Activated CD4-positive, alpha-beta T cell treated with anti-CD3 and anti-CD28 coated beads for 36 hours (primary cell): ENCODE measurements at regions of chr9 and their contacts with region 1.

Region 1: DNA sequence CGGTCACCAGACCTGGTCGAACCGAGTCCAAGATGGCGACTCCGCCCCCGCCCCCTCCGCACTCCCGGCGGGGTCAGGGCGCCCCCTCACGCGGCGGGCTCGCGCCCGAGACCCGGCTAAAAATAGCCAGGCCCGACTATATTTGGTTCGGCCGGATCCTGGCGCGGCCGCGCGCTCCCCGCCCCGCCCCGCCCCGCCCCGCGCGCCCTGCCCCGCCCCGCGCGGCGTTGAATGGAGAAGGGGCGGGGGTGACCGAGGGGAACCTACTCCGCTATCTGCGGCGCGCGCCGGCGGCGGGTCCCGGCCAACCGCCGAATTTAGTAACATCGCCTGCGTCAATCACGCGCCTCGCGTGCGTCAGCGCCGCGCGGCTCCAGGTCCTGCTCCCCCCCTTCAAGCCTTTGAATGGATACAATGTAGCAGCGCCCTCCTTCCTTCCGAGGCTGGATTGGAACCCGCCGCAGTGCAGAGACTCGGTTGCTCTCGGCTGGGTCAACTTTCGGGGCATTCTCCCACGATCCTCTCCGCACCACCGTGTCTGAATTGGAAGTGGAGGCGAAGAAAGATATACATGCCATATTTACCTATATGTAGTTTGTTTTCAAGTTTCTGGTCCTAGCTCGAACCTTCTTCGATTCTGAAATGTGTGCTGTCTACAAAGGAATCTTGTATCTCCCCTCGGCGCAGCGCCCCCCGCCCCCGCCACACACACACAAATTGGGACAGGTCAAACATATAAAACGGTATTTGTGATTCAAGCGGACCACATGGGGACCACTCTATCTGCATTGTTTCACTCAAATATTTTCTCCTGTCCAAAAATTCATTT is 1.6 kb upstream of the NR4A3 start:
- DNase-seq: peak; percentile 95
- ATAC-seq: peak; percentile 39
- H3K4me3 Mint-ChIP-seq: peak overlapping the region; percentile 88
- H3K27ac Mint-ChIP-seq: peak overlapping the region; percentile 94
- H3K4me1 Mint-ChIP-seq: peaks cover 42% of the 10 kb centered on the region
- H3K27me3 Mint-ChIP-seq: peaks cover 4% of the 10 kb centered on the region

Region 2: GRCh38 chr9:98796364-98797101 is 1023.5 kb before region 1 on chr9 and contains the start of gene ANKS6:
- CTCF ChIA-PET with region 1: no interaction called
- POLR2A ChIA-PET with region 1: no interaction called
- intact Hi-C with region 1: loop called in 1 of 2 experiments (anchors 5 kb)
- DNase-seq: peak; percentile 90
- ATAC-seq: peak; percentile 90
- H3K4me3 Mint-ChIP-seq: peak within 1 kb of the TSS; percentile 77
- H3K27ac Mint-ChIP-seq: peak within 1 kb of the TSS; percentile 81
- H3K4me1 Mint-ChIP-seq: peaks cover 25% of the 10 kb centered on the region
- H3K27me3 Mint-ChIP-seq: no peaks in the 10 kb centered on the region
- total RNA-seq, gene ANKS6: 15.8 to 17.4 TPM

Region 3: GRCh38 chr9:99253772-99254431 is 566.2 kb before region 1 on chr9:
- CTCF ChIA-PET with region 1: no interaction called
- POLR2A ChIA-PET with region 1: interaction called, 3 read pairs
- intact Hi-C with region 1: loop called (anchors 1 kb)
- DNase-seq: peak; percentile 95
- ATAC-seq: peak; percentile 83
- H3K4me3 Mint-ChIP-seq: peak overlapping the region; percentile 58
- H3K27ac Mint-ChIP-seq: peak overlapping the region; percentile 95
- H3K4me1 Mint-ChIP-seq: peaks cover 60% of the 10 kb centered on the region
- H3K27me3 Mint-ChIP-seq: peaks cover 5% of the 10 kb centered on the region

Region 4: GRCh38 chr9:99906403-99907207 is 86.5 kb after region 1 on chr9 and contains the start of gene STX17:
- CTCF ChIA-PET with region 1: interaction called, 3 read pairs
- POLR2A ChIA-PET with region 1: interaction called, 3 read pairs
- intact Hi-C with region 1: loop called (anchors 1 kb)
- DNase-seq: peak; percentile 85
- ATAC-seq: peak; percentile 92
- H3K4me3 Mint-ChIP-seq: peak within 1 kb of the TSS; percentile 97
- H3K27ac Mint-ChIP-seq: peak within 1 kb of the TSS; percentile 96
- H3K4me1 Mint-ChIP-seq: peaks cover 26% of the 10 kb centered on the region
- H3K27me3 Mint-ChIP-seq: peaks cover 2% of the 10 kb centered on the region
- total RNA-seq, gene STX17: 32.8 to 35.2 TPM

Region 5: GRCh38 chr9:100098887-100099721 is 279.0 kb after region 1 on chr9 and contains the starts of genes ERP44 and INVS:
- CTCF ChIA-PET with region 1: no interaction called
- POLR2A ChIA-PET with region 1: no interaction called
- intact Hi-C with region 1: loop called (anchors 1 to 2 kb)
- DNase-seq: peak; percentile 98
- ATAC-seq: peak; percentile 99
- H3K4me3 Mint-ChIP-seq: peak within 1 kb of the TSS; percentile 100
- H3K27ac Mint-ChIP-seq: peak within 1 kb of the TSS; percentile 97
- H3K4me1 Mint-ChIP-seq: peaks cover 24% of the 10 kb centered on the region
- H3K27me3 Mint-ChIP-seq: no peaks in the 10 kb centered on the region
- total RNA-seq, gene ERP44: 12.0 to 12.4 TPM
- total RNA-seq, gene INVS: 14.1 to 19.3 TPM

Region 6: GRCh38 chr9:100598641-100599145 is 778.6 kb after region 1 on chr9:
- CTCF ChIA-PET with region 1: no interaction called
- POLR2A ChIA-PET with region 1: no interaction called
- intact Hi-C with region 1: loop called in 1 of 2 experiments (anchors 5 kb)
- DNase-seq: peak; percentile 87
- ATAC-seq: peak; percentile 87
- H3K4me3 Mint-ChIP-seq: peak overlapping the region; percentile 59
- H3K27ac Mint-ChIP-seq: peak overlapping the region; percentile 45
- H3K4me1 Mint-ChIP-seq: peaks cover 20% of the 10 kb centered on the region
- H3K27me3 Mint-ChIP-seq: no peaks in the 10 kb centered on the region